B cell (primary cell): ENCODE measurements at regions of chr5 and their contacts with region 1.

Region 1: DNA sequence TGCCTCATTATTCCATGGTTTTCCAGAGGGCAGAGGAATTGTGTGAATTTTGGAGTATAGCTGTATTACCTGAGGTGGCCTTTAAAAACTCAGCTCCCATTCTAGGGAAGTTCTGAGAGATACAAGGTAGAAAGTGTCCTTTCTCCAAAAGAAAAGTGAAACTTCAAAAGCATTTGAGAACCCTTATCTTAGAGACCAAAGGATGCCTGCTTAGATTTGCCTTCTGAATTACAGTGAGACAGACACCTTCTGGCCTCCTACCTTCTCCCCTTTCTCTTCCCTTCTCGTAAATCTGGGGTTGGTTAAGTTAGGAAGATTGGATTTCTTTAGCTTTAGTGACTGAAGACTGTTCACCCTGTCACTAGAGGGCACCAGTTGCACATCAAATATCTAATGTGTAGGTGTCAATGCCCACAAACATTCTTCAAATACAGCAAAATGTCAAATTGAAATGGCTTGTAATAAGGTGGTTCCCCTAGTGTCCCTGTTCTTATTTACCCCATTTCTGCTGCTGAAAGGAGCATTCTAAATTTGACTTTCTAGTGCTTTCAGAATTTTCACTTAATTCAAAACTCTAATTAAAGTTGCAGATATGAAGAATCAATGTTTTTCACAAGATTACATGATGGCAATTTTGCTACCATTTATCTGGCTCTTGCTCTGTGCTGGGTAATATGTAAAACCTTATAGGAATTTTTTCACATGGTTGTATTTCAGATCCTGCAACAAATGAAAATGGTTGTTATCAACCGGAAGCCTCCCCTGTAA is 46.7 kb downstream of the PRRC1 start:
- DNase-seq: peak; percentile 68
- ATAC-seq: peak; percentile 56
- H3K4me3 ChIP-seq: no peak overlapping the region
- H3K4me3 Mint-ChIP-seq: no peak overlapping the region
- H3K27ac ChIP-seq: no peak overlapping the region
- H3K27ac Mint-ChIP-seq: no peak overlapping the region
- H3K4me1 ChIP-seq: no peaks in the 10 kb centered on the region
- H3K4me1 Mint-ChIP-seq: peaks cover 7% of the 10 kb centered on the region
- H3K27me3 ChIP-seq: no peaks in the 10 kb centered on the region
- H3K27me3 Mint-ChIP-seq: peaks cover 7% of the 10 kb centered on the region
- CTCF ChIP-seq: peak; percentile 84

Region 2: GRCh38 chr5:127536687-127537086 is 27.5 kb before region 1 on chr5:
- CTCF ChIA-PET with region 1: no interaction called
- POLR2A ChIA-PET with region 1: no interaction called
- intact Hi-C with region 1: no loop called
- DNase-seq: no peak
- ATAC-seq: no peak
- H3K4me3 ChIP-seq: no peak overlapping the region
- H3K4me3 Mint-ChIP-seq: no peak overlapping the region
- H3K27ac ChIP-seq: no peak overlapping the region
- H3K27ac Mint-ChIP-seq: no peak overlapping the region
- H3K4me1 ChIP-seq: no peaks in the 10 kb centered on the region
- H3K4me1 Mint-ChIP-seq: no peaks in the 10 kb centered on the region
- H3K27me3 ChIP-seq: no peaks in the 10 kb centered on the region
- H3K27me3 Mint-ChIP-seq: no peaks in the 10 kb centered on the region
- CTCF ChIP-seq: peak; percentile 60

Region 3: DNA sequence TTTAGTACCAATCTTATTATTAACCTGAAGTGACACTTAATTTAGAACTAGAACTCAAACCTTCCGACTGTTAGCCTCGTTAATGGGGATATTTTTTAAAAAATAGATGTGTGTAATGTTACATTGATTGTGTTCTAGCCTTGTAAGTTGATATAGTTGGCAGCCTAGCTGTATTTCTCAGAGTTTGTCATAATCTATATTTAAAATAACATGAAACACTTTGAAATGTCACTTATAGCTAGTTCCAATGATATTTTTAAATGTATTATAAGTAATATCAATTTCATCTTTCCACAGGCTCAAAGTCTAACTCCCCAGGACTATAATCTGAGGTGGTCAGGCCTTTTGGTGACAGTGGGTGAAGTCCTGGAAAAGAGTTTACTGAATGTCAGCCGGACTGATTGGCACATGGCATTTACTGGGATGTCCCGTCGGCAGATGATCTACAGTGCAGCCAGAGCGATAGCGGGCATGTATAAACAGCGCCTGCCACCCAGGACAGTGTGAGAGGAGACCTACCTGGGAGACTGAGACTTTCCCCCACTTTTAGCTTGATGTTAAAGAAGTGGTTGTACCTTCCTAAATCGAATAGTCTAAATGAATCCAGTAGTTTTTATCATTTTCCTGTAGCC is 12.7 kb before region 1 on chr5:
- CTCF ChIA-PET with region 1: interaction called, 17 read pairs
- POLR2A ChIA-PET with region 1: no interaction called
- intact Hi-C with region 1: no loop called
- DNase-seq: no peak
- ATAC-seq: no peak
- H3K4me3 ChIP-seq: no peak overlapping the region
- H3K4me3 Mint-ChIP-seq: no peak overlapping the region
- H3K27ac ChIP-seq: no peak overlapping the region
- H3K27ac Mint-ChIP-seq: no peak overlapping the region
- H3K4me1 ChIP-seq: no peaks in the 10 kb centered on the region
- H3K4me1 Mint-ChIP-seq: no peaks in the 10 kb centered on the region
- H3K27me3 ChIP-seq: no peaks in the 10 kb centered on the region
- H3K27me3 Mint-ChIP-seq: no peaks in the 10 kb centered on the region
- CTCF ChIP-seq: no peak

Region 4: DNA sequence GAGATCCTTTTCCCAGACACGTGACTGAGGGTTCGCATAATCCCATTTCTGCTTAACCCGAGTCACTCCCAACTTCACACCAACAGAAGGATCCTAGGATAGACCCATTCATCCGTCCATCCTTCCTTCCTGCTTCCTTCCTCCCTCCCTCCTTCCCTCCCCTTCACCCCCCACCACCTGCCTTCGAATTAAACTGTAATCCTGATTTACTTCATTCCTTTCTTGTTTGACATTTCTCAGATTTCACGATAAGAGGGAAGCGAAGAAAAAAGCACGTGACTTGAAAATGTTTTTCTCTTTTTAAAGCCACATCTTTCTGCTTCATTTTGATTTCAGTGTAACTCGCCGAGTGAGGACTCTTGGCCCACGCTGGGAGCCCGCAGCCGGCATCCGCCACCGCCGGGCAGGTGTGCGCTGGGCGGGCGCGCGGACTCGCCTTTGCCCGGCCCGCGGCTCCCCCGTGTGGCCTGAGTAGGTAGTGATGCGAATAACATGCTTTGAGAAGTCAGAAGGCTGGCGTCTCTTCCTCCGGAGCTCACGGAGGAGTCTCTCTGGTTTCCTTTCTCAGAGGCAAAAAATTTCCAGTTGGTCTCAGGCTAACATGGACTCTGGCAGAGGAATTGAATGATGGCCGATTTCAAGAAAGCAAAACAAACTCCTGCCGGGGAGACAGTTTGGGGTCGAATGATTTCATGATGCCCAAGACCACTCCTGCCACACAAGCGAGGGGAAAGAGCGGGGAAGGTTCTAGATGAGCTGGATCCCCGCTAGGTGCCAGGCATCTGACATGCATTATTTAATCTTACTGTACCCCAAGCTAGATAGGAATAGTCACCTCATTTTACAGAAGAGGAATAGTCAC is 637.1 kb after region 1 on chr5:
- CTCF ChIA-PET with region 1: interaction called, 27 read pairs
- POLR2A ChIA-PET with region 1: interaction called, 3 read pairs
- intact Hi-C with region 1: no loop called
- DNase-seq: peak; percentile 76
- ATAC-seq: peak; percentile 99
- H3K4me3 ChIP-seq: no peak overlapping the region
- H3K4me3 Mint-ChIP-seq: peak overlapping the region; percentile 27
- H3K27ac ChIP-seq: no peak overlapping the region
- H3K27ac Mint-ChIP-seq: no peak overlapping the region
- H3K4me1 ChIP-seq: peaks cover 7% of the 10 kb centered on the region in 2 donors
- H3K4me1 Mint-ChIP-seq: peaks cover 7% of the 10 kb centered on the region
- H3K27me3 ChIP-seq: peaks cover 0 to 2% (median 0%) of the 10 kb centered on the region in 4 experiments
- H3K27me3 Mint-ChIP-seq: peaks cover 3% of the 10 kb centered on the region
- CTCF ChIP-seq: peak; percentile 91

Region 5: DNA sequence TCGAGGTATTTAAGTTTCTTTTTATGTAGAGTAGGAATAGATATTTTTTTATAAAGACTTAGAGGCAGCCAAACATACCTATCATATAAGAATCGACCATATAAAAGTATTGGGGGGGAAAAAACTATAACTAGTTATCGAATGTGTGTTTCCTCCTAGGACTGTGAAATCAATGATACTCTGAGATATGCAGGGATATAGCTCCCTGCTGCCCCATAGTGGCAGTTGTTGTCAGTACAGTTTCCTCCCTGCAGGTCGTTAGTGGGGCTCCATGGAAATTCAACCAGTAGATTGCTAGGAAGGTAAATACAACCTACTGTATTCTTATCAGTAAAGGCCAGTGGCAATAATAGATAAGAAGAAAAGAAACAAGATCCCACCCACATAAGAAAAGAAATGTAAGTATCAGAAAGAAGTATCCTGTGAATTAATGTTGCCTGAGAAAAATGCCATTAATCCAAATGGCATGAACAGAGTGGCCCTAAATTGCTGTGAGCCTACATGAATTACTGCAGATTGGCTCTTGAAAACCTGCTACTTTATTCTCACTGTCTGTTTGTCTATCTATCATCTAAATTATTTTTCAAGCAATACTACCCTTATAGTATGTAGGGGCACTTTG is 1110.8 kb after region 1 on chr5:
- CTCF ChIA-PET with region 1: interaction called, 14 read pairs
- POLR2A ChIA-PET with region 1: no interaction called
- intact Hi-C with region 1: no loop called
- DNase-seq: peak; percentile 6
- ATAC-seq: no peak
- H3K4me3 ChIP-seq: no peak overlapping the region
- H3K4me3 Mint-ChIP-seq: no peak overlapping the region
- H3K27ac ChIP-seq: no peak overlapping the region
- H3K27ac Mint-ChIP-seq: no peak overlapping the region
- H3K4me1 ChIP-seq: no peaks in the 10 kb centered on the region
- H3K4me1 Mint-ChIP-seq: no peaks in the 10 kb centered on the region
- H3K27me3 ChIP-seq: no peaks in the 10 kb centered on the region
- H3K27me3 Mint-ChIP-seq: no peaks in the 10 kb centered on the region
- CTCF ChIP-seq: peak; percentile 59

Region 6: GRCh38 chr5:128905571-128906110 is 1341.5 kb after region 1 on chr5:
- CTCF ChIA-PET with region 1: no interaction called
- POLR2A ChIA-PET with region 1: no interaction called
- intact Hi-C with region 1: loop called (anchors 10 kb)
- DNase-seq: peak; percentile 53
- ATAC-seq: peak; percentile 47
- H3K4me3 ChIP-seq: no peak overlapping the region
- H3K4me3 Mint-ChIP-seq: no peak overlapping the region
- H3K27ac ChIP-seq: no peak overlapping the region
- H3K27ac Mint-ChIP-seq: no peak overlapping the region
- H3K4me1 ChIP-seq: no peaks in the 10 kb centered on the region
- H3K4me1 Mint-ChIP-seq: no peaks in the 10 kb centered on the region
- H3K27me3 ChIP-seq: no peaks in the 10 kb centered on the region
- H3K27me3 Mint-ChIP-seq: no peaks in the 10 kb centered on the region
- CTCF ChIP-seq: peak; percentile 86